Colonic mucosa (tissue), 4 donors: ENCODE measurements at regions of chr13 and their contacts with region 1.

Region 1: DNA sequence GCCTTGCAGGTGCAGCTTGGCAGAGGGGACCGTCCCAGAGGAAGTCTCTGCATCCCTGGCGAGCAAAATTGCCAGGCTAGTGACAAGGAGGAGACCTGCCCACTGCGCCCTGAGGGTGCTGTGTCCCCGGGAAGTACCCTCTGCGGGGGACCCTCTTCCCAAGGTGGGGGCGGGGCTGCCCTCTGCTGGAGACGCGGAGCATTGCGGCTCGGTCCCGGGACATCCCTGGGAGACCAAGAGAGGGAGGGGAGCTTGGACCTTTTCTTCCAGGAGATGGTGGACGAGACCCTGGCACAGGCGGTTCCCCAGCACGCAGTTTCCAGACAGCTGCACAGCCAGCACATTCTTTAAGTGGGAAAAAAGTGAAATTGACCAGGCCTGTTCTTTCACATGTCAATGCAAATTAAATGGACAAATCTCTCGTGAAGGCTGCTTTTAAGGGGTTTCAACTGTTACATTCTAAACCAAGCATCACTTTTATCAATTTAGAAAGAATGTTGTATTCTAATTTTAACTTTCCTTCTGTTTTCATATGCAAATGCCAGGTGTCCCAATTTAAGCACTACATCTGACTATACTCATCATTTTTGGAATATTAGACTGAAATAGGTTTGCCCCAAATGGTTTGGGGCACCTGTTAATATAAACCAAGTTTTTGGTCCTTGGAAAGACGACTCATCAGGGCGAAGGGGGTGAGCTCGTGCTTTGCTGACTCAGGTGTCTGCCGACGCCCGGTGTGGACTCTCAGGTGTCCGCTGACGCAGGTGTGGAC is 60.7 kb downstream of the MCF2L start:
- DNase-seq: peak; percentile 56
- H3K4me3 ChIP-seq: no peak overlapping the region
- H3K27ac ChIP-seq: no peak overlapping the region
- H3K4me1 ChIP-seq: no peaks in the 10 kb centered on the region
- H3K27me3 ChIP-seq: no peaks in the 10 kb centered on the region
- CTCF ChIP-seq: peak; percentile 91

Region 2: GRCh38 chr13:112942689-112943308 is 86.9 kb before region 1 on chr13:
- intact Hi-C with region 1: loop called (anchors 2 kb)
- DNase-seq: peak; percentile 100
- H3K4me3 ChIP-seq: peak overlapping the region; percentile 63
- H3K27ac ChIP-seq: peak overlapping the region; percentile 36
- H3K4me1 ChIP-seq: no peaks in the 10 kb centered on the region
- H3K27me3 ChIP-seq: no peaks in the 10 kb centered on the region
- CTCF ChIP-seq: peak; percentile 94